ENCODE measurements at regions of chrX and their contacts with region 1.

Region 1: GRCh38 chrX:135112096-135112729 is 8.1 kb downstream of the ETDB start:
- H3K4me3 ChIP-seq: no peak overlapping the region
- H3K27ac ChIP-seq: no peak overlapping the region
- H3K4me1 ChIP-seq: no peaks in the 10 kb centered on the region
- CTCF ChIP-seq: no peak

Region 2: DNA sequence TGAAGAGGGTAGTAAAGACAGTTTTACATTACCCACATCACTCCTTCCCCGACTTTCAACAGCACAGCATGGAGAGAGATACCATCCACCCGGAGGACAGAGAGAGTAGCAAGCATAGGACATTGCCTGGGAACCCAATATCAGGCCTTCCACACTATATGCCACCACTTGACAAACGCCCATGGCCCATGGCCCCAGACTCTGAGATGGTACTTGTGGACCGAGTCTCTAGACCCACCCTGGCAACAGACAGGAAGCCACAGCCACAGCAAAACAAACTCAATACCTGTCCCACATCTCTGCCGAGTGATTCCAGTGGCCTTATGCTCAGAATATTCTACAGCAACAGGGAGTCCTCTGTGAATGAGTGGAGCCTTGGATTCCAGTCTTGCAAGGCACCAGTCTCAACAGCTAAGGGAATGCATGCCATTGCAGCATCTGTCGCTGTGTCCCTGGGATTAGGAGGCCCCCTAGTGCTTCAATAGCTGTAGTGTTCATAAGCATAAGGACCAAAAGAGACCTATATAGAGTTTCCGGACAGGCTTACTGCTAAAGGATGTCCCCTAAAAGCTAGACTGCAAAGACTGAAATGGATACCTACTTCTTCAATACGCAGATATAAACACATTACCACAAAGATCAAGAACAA is 73.7 kb after region 1 on chrX:
- CTCF ChIA-PET with region 1: interaction called, 20 read pairs
- POLR2A ChIA-PET with region 1: interaction called, 6 read pairs
- H3K4me3 ChIP-seq: no peak overlapping the region
- H3K27ac ChIP-seq: no peak overlapping the region
- H3K4me1 ChIP-seq: no peaks in the 10 kb centered on the region
- CTCF ChIP-seq: peak; percentile 53; the same call in 1 of the 2 replicates